Activated CD8-positive, alpha-beta memory T cell treated with anti-CD3 and anti-CD28 coated beads, Interleukin-2, amount 10 ng/mL, durations not matched to agents 7 days and 5 days (primary cell): ENCODE measurements at regions of chr10 and their contacts with region 1.

Region 1: DNA sequence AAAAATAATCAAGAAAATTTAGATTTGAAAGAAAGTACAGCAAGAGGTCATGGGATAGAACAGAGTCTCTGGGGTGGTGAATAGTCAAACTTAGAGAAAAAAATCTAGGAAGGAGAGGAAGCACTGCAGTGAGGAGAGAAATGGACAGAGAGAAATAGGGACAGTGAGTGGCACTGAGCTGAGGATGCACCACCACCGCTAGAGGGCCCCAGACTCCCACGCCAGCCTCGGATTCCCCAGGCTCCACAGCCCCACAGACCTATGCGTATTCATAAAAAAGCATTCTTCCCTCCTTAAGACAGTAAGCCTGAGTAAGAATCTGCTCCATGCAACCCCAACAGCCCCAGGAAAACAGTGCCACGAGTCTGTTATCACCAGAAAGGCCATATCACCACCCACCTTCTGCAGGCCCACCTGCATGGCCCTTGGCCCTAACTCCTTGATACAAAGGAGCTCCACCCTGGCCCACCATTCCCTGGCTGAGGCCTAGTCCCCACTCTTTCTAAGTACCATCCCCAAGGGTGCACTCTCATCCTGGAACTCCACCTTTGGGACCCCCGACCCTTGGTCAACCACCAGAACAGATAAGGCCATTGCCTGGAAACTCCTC is 91.0 kb downstream of the ALOX5 start:
- DNase-seq: peak; percentile 86
- ATAC-seq: peak; percentile 99
- H3K4me3 Mint-ChIP-seq: no peak overlapping the region
- H3K27ac Mint-ChIP-seq: no peak overlapping the region
- H3K4me1 Mint-ChIP-seq: peaks cover 52% of the 10 kb centered on the region
- H3K27me3 Mint-ChIP-seq: no peaks in the 10 kb centered on the region

Region 2: DNA sequence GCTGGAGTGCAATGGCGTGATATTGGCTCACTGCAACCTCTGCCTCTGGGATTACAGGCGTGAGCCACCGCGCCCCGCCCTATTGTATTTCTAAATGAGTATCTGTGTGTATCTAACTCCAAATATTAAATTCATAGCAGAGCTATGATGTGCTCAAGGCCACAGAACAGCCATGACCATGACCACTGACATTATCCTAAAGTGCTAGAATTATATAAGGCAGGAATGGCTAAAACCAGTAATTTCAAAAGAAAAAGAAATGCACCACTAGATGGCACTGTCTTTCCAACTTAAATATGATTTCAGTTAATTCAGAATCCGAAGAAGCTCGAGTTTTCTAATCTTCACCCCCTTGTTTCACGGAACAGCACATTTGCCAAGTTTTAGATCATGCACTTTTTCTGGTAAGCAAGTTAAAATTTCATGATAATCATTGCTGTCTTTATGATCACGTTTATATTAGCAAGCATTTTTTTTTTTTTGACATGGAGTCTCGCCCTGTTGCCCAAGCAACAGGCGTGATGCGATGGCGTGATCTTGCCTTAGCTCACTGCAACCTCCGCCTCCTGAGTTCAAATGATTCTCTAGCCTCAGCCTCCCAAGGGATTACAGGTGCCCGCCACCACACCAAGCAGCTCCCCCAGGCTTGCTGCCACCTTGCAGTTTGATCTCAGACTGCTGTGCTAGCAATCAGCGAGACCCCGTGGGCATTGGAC is 214.9 kb before region 1 on chr10:
- CTCF ChIA-PET with region 1: interaction called, 11 read pairs
- DNase-seq: no peak
- ATAC-seq: peak; percentile 63
- H3K4me3 Mint-ChIP-seq: peak overlapping the region; percentile 38
- H3K27ac Mint-ChIP-seq: peak overlapping the region; percentile 20
- H3K4me1 Mint-ChIP-seq: peaks cover 18% of the 10 kb centered on the region
- H3K27me3 Mint-ChIP-seq: peaks cover 21% of the 10 kb centered on the region

Region 3: DNA sequence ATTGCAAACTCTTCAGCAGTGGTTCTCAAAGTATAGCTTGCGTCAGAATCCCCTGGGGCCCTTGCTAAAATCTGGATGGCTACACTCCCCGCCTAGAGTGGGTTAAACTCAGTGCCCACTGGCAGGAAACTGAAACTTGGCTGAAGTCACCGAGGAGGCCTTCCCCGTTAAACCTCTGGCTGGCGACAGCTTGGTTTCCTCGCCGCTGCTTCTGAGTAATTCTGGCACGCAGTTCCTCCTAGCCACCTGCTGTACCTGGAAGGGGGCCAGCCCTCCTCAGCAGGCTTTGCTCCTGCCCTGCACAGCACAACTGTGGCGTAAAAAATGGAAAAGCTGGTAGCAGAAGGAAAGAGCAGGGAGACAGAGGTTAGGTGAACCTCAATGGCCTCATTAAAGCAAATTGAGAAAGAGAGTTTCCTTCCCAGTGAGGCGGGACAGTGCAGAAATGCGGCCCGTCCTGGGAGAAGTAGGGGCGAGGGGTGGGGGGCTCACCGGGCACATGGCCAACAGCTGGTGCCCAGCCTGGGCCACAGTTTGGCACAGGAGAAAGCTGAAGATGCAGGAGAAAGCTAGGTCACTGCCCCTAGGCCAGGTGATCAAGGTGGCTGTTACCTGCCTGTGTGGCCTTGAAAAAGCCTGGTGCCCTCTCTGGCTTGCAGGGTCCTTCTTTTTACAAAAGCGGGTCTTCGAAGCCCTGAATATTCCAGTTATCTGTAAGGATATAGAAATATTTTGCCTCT is 44.4 kb before region 1 on chr10:
- CTCF ChIA-PET with region 1: interaction called, 14 read pairs
- DNase-seq: peak; percentile 89
- ATAC-seq: peak; percentile 40
- H3K4me3 Mint-ChIP-seq: peak overlapping the region; percentile 91
- H3K27ac Mint-ChIP-seq: peak overlapping the region; percentile 97
- H3K4me1 Mint-ChIP-seq: peaks cover 80% of the 10 kb centered on the region
- H3K27me3 Mint-ChIP-seq: no peaks in the 10 kb centered on the region

Region 4: GRCh38 chr10:45453639-45454255 is 11.3 kb before region 1 on chr10:
- CTCF ChIA-PET with region 1: interaction called, 12 read pairs
- DNase-seq: no peak
- ATAC-seq: no peak
- H3K4me3 Mint-ChIP-seq: no peak overlapping the region
- H3K27ac Mint-ChIP-seq: no peak overlapping the region
- H3K4me1 Mint-ChIP-seq: peaks cover 39% of the 10 kb centered on the region
- H3K27me3 Mint-ChIP-seq: no peaks in the 10 kb centered on the region

Region 5: DNA sequence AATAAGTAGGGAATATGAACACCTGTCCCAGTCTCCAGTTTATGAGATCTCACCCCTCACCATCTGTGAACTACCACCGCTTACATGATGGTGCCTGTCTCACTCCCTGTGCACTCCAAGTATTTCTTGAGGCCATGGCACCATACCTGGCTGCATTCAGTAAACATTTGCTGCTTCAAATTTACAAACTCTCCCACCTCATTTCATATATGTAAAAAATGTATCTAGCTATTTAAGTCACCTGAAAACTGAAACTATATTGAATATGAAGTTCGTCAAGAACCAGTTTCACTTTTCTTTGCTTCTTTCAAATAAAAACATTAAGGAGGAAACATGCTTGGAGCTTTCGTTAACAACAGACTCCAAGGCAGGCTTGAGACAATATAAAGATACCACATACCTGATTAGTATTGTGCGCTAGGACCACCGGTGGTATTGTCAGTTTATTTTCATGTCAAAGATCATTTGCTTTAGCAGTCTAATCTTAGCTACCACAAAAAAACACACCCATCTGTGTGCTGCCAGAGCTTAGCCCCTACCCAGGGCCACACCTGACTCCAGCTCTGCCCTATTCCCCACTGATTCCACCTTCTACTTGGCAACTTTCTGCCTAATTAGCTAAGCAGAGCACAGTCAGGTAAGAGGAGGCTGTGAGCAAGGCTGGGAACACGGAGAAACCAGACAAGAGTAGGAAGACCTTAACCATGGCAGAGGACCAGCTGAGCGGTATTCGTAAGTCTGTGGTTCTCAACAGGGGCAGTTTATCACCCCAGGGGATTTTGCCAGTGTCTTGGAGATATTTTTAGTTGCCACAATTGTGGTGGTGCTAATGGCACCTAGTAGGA is 115.5 kb after region 1 on chr10:
- CTCF ChIA-PET with region 1: interaction called, 11 read pairs
- DNase-seq: no peak
- ATAC-seq: peak; percentile 77
- H3K4me3 Mint-ChIP-seq: peak overlapping the region; percentile 84
- H3K27ac Mint-ChIP-seq: peak overlapping the region; percentile 94
- H3K4me1 Mint-ChIP-seq: peaks cover 30% of the 10 kb centered on the region
- H3K27me3 Mint-ChIP-seq: no peaks in the 10 kb centered on the region

Region 6: GRCh38 chr10:45672181-45673073 is 207.4 kb after region 1 on chr10 and contains the start of gene ZFAND4:
- CTCF ChIA-PET with region 1: interaction called, 43 read pairs
- DNase-seq: peak; percentile 98
- ATAC-seq: peak; percentile 98
- H3K4me3 Mint-ChIP-seq: peak within 1 kb of the TSS; percentile 86
- H3K27ac Mint-ChIP-seq: peak within 1 kb of the TSS; percentile 89
- H3K4me1 Mint-ChIP-seq: peaks cover 35% of the 10 kb centered on the region
- H3K27me3 Mint-ChIP-seq: no peaks in the 10 kb centered on the region
- total RNA-seq, gene ZFAND4: 15.7 to 21.1 TPM